HepG2 (cell line): ENCODE measurements at regions of chr12 and their contacts with region 1.

Region 1: GRCh38 chr12:56127888-56128669 is at the start of gene ESYT1:
- DNase-seq: peak; percentile 100
- ATAC-seq: peak; percentile 90
- H3K4me3 ChIP-seq: peak within 1 kb of the TSS; percentile 72 to 89 (median 83)
- H3K27ac ChIP-seq: peak within 1 kb of the TSS; percentile 65
- H3K4me1 ChIP-seq: peaks cover 61% of the 10 kb centered on the region
- H3K27me3 ChIP-seq: no peaks in the 10 kb centered on the region
- CTCF ChIP-seq: peak; percentile 42
- EP300 ChIP-seq: no peak
- POLR2A ChIP-seq: peak; percentile 90 to 96
- RAD21 ChIP-seq: 0 out of 2 replicates have a peak, but pooled peaks have one; percentile 11
- total RNA-seq, gene ESYT1: 30.1 and 66.9 TPM in 2 replicates

Region 2: GRCh38 chr12:56078990-56079664 is 49.0 kb before region 1 on chr12:
- CTCF ChIA-PET with region 1: no interaction called
- POLR2A ChIA-PET with region 1: interaction called, 29 read pairs
- in situ Hi-C with region 1: no loop called
- intact Hi-C with region 1: no loop called
- DNase-seq: peak; percentile 81
- ATAC-seq: peak; percentile 61
- H3K4me3 ChIP-seq: peak overlapping the region; percentile 89 to 96 (median 91)
- H3K27ac ChIP-seq: peak overlapping the region; percentile 99
- H3K4me1 ChIP-seq: peaks cover 49% of the 10 kb centered on the region
- H3K27me3 ChIP-seq: no peaks in the 10 kb centered on the region; a peak in 1 of 5 replicates
- CTCF ChIP-seq: peak; percentile 83
- EP300 ChIP-seq: 0 out of 4 replicates have a peak, but pooled peaks of 1 of the 2 experiments have one; percentile 22
- POLR2A ChIP-seq: peak; percentile 67 to 73; a peak in 3 of 4 replicates
- RAD21 ChIP-seq: peak; percentile 80

Region 3: GRCh38 chr12:56104109-56104814 is 23.8 kb before region 1 on chr12 and contains the start of gene PA2G4:
- CTCF ChIA-PET with region 1: no interaction called
- POLR2A ChIA-PET with region 1: interaction called, 30 read pairs
- in situ Hi-C with region 1: no loop called
- intact Hi-C with region 1: no loop called
- DNase-seq: peak; percentile 97
- ATAC-seq: peak; percentile 94
- H3K4me3 ChIP-seq: peak within 1 kb of the TSS; percentile 50 to 85 (median 74)
- H3K27ac ChIP-seq: peak within 1 kb of the TSS; percentile 76
- H3K4me1 ChIP-seq: peaks cover 35% of the 10 kb centered on the region
- H3K27me3 ChIP-seq: no peaks in the 10 kb centered on the region
- CTCF ChIP-seq: 0 out of 2 replicates have a peak, but pooled peaks have one; percentile 10
- EP300 ChIP-seq: peak in 1 of 2 experiments; percentile 21; a peak in 2 of 4 replicates
- POLR2A ChIP-seq: peak; percentile 91
- RAD21 ChIP-seq: no peak
- total RNA-seq, gene PA2G4: 240 and 281 TPM in 2 replicates

Region 4: GRCh38 chr12:56143870-56144269 is 15.8 kb after region 1 on chr12:
- CTCF ChIA-PET with region 1: no interaction called
- POLR2A ChIA-PET with region 1: interaction called, 14 read pairs
- in situ Hi-C with region 1: no loop called
- intact Hi-C with region 1: no loop called
- DNase-seq: no peak
- ATAC-seq: no peak
- H3K4me3 ChIP-seq: no peak overlapping the region
- H3K27ac ChIP-seq: no peak overlapping the region
- H3K4me1 ChIP-seq: no peaks in the 10 kb centered on the region
- H3K27me3 ChIP-seq: no peaks in the 10 kb centered on the region
- CTCF ChIP-seq: no peak
- EP300 ChIP-seq: no peak
- POLR2A ChIP-seq: no peak
- RAD21 ChIP-seq: no peak

Region 5: DNA sequence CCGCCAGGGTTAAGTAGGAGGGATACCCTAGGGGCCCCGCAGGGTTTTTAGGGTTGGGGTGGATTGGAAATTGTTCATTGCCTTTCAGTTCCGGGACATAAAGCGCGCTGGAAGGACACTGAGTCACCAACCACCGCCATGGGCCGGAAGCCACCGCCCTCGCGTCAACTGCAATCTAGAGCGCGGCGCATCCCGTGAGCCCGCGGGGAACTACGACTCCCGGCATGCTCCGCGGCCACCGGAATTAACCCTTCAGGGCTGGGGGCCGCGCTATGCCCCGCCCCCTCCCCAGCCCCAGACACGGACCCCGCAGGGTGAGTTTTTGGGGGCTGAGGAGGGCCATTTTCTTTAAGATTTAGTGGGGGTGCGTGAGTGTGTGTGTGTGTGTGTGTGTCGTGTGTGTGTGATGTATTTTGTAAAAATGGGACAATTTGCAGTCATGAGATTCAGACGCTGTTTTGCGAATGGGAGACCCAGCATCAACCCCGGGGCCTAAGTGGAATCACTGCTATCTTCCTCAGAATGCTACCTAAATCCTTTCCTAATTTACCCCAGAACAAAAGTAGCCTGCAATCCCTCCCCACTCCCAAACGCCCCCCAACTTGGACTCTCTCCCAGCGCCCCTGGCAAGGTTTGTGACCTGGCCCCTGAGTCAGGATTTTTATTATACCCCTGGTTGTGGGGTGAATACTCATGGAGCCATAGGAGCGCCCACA is 24.4 kb after region 1 on chr12 and contains the start of gene MYL6B:
- CTCF ChIA-PET with region 1: interaction called, 7 read pairs
- POLR2A ChIA-PET with region 1: interaction called, 42 read pairs
- in situ Hi-C with region 1: loop called (anchors 5 kb)
- intact Hi-C with region 1: loop called (anchors 1 kb)
- DNase-seq: peak; percentile 83
- ATAC-seq: peak; percentile 89
- H3K4me3 ChIP-seq: peak within 1 kb of the TSS; percentile 79 to 86 (median 82)
- H3K27ac ChIP-seq: peak within 1 kb of the TSS; percentile 89
- H3K4me1 ChIP-seq: peaks cover 41% of the 10 kb centered on the region
- H3K27me3 ChIP-seq: no peaks in the 10 kb centered on the region; a peak in 1 of 5 replicates
- CTCF ChIP-seq: peak; percentile 25; the same call in 1 of the 2 replicates
- EP300 ChIP-seq: peak; percentile 29 to 30; a peak in 2 of 4 replicates
- POLR2A ChIP-seq: peak; percentile 66 to 81; a peak in 2 of 4 replicates
- RAD21 ChIP-seq: no peak
- total RNA-seq, gene MYL6B: 75.7 and 76.5 TPM in 2 replicates

Region 6: GRCh38 chr12:56158029-56158925 is 30.2 kb after region 1 on chr12 and contains the start of gene MYL6:
- CTCF ChIA-PET with region 1: interaction called, 7 read pairs
- POLR2A ChIA-PET with region 1: interaction called, 30 read pairs
- in situ Hi-C with region 1: loop called (anchors 5 kb)
- intact Hi-C with region 1: loop called (anchors 2 kb)
- DNase-seq: peak; percentile 96
- ATAC-seq: peak; percentile 84
- H3K4me3 ChIP-seq: peak within 1 kb of the TSS; percentile 92 to 99 (median 95)
- H3K27ac ChIP-seq: peak within 1 kb of the TSS; percentile 87
- H3K4me1 ChIP-seq: peaks cover 64% of the 10 kb centered on the region
- H3K27me3 ChIP-seq: no peaks in the 10 kb centered on the region; a peak in 1 of 5 replicates
- CTCF ChIP-seq: no peak
- EP300 ChIP-seq: no peak
- POLR2A ChIP-seq: peak; percentile 98 to 99
- RAD21 ChIP-seq: no peak
- total RNA-seq, gene MYL6: 1,192 and 1,778 TPM in 2 replicates

Region 7: GRCh38 chr12:56266693-56267442 is 138.8 kb after region 1 on chr12 and contains the start of gene COQ10A:
- CTCF ChIA-PET with region 1: no interaction called
- POLR2A ChIA-PET with region 1: interaction called, 10 read pairs
- in situ Hi-C with region 1: no loop called
- intact Hi-C with region 1: no loop called
- DNase-seq: peak; percentile 83
- ATAC-seq: peak; percentile 90
- H3K4me3 ChIP-seq: peak within 1 kb of the TSS; percentile 54 to 91 (median 83)
- H3K27ac ChIP-seq: peak within 1 kb of the TSS; percentile 82
- H3K4me1 ChIP-seq: peaks cover 18% of the 10 kb centered on the region
- H3K27me3 ChIP-seq: no peaks in the 10 kb centered on the region; a peak in 1 of 5 replicates
- CTCF ChIP-seq: peak; percentile 89
- EP300 ChIP-seq: no peak
- POLR2A ChIP-seq: peak; percentile 90 to 92
- RAD21 ChIP-seq: peak; percentile 62
- total RNA-seq, gene COQ10A: 18.6 and 21.0 TPM in 2 replicates